T-cell (primary cell): ENCODE measurements at regions of chr2 and their contacts with region 1.

Region 1: DNA sequence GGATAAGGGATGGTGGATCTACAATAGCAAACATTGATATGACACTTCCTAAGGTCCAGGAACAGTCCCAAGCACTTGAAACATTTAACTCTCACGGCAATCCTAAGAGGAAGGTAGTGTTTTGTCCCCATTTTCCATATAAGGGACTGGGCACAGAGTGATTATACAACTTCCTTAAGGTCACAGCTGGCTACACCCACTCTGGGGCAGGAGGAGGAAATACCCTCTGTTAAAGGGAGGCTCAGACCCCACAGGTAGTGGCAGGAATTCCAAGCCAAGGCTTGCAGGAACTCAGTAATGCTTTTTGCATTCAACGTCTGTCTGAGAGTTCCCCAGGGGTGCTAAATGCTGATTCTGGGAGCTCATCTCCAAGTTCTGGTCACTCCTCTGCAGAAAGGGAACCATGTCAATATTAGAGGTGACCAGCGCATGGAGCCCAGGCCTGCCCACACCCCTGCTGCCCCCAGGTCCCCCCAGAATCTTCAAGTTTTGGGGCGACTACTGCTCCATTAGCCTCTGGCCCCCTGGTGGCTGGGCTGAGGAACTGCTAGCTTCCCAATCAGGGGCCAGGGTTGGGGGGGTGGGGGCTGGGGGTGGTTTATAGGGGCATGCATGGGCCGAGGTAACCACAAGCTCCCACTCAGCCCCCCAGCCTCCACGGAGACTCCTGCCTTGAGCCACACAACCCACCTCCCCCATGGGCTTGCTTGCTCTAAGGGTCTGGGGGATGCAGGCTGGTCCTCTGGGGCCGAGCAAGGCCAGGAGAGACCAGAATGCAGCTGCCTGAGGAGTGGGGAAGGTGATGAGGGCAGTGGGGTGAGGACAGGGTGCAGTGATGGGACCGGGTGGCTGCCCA is 11.1 kb downstream of the OBSL1 start:
- DNase-seq: peak in 4 of 35 experiments; percentile 25 to 49 (median 32)
- ATAC-seq: peak; percentile 38 to 67 (median 51)
- H3K4me3 ChIP-seq: no peak overlapping the region
- H3K4me3 Mint-ChIP-seq: no peak overlapping the region
- H3K27ac ChIP-seq: no peak overlapping the region
- H3K27ac Mint-ChIP-seq: no peak overlapping the region
- H3K4me1 ChIP-seq: no peaks in the 10 kb centered on the region
- H3K4me1 Mint-ChIP-seq: no peaks in the 10 kb centered on the region
- H3K27me3 ChIP-seq: peaks cover 0 to 75% of the 10 kb centered on the region in 2 experiments
- H3K27me3 Mint-ChIP-seq: peaks cover 19 to 25% of the 10 kb centered on the region in 2 donors

Region 2: DNA sequence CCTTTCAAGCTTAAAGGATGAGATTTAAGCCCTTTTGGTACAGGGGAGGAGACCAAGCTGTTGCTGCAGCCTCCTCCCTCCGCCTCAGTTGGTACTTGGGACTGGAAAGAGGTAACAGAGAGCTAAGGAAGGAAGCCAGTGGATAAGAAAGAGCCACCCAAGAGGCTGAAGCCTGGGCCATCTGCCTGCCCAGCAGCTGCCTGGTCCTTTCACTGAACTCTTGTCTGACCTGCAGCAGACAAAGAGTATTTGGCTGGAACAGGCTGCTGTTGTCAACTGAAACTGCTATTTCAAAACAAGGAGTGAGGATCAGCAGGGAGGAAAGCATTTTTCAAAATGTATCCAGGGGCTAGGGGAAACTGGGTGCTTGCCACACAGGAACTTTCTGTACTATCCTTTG is 1587.8 kb before region 1 on chr2:
- CTCF ChIA-PET with region 1: no interaction called
- POLR2A ChIA-PET with region 1: no interaction called
- DNase-seq: no peak
- ATAC-seq: no peak
- H3K4me3 ChIP-seq: no peak overlapping the region
- H3K4me3 Mint-ChIP-seq: no peak overlapping the region
- H3K27ac ChIP-seq: no peak overlapping the region
- H3K27ac Mint-ChIP-seq: no peak overlapping the region
- H3K4me1 ChIP-seq: no peaks in the 10 kb centered on the region
- H3K4me1 Mint-ChIP-seq: no peaks in the 10 kb centered on the region
- H3K27me3 ChIP-seq: peaks cover 0 to 7% of the 10 kb centered on the region in 2 experiments
- H3K27me3 Mint-ChIP-seq: peaks cover 10 to 15% of the 10 kb centered on the region in 2 donors

Region 3: DNA sequence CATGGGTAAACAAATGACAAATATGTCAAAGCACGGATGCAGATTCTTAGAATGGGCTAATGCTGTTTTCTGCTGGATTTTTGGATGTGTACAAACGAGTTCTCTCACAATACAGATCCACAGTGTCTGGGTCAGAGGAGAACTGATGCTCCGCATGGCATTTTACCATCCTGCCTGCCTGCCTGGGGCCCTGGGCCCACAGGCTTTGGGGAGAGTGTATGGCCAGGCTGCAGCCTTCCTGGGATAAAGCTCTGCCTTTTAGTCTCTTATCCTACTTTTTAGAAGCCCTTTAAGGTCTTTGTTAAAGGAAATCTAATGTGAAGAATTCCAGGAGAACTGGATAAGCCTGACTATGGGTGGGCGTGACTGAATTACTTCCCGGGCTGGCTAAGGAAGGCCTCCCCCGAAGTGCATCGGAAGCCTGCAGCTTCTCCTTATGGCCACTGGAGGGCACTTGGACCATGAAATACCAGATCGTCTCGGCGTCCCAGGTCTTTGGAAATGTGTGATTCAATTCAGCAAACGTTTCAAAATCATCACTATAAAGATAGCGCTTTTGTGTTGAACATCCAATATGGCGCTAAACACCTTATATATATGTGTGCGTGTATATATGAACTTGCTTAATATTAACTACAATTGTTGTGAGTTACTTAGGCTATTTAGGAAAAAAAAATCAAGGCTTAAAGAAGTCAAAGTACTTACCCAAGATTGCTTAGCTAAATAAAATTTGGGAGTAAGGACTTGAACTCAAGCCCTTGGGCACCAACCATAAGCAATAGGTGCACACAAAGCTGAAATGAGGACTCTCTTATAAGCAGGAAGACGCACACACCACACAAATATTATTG is 157.4 kb before region 1 on chr2:
- CTCF ChIA-PET with region 1: no interaction called
- POLR2A ChIA-PET with region 1: no interaction called
- DNase-seq: peak; percentile 15 to 77 (median 47)
- ATAC-seq: peak; percentile 86 to 90 (median 88)
- H3K4me3 ChIP-seq: no peak overlapping the region
- H3K4me3 Mint-ChIP-seq: no peak overlapping the region
- H3K27ac ChIP-seq: no peak overlapping the region
- H3K27ac Mint-ChIP-seq: no peak overlapping the region
- H3K4me1 ChIP-seq: peaks cover 0 to 7% of the 10 kb centered on the region in 2 experiments
- H3K4me1 Mint-ChIP-seq: peaks cover 0 to 5% (median 5%) of the 10 kb centered on the region in 3 donors
- H3K27me3 ChIP-seq: peaks cover 0 to 37% of the 10 kb centered on the region in 2 experiments
- H3K27me3 Mint-ChIP-seq: peaks cover 0 to 9% of the 10 kb centered on the region in 2 donors

Region 4: DNA sequence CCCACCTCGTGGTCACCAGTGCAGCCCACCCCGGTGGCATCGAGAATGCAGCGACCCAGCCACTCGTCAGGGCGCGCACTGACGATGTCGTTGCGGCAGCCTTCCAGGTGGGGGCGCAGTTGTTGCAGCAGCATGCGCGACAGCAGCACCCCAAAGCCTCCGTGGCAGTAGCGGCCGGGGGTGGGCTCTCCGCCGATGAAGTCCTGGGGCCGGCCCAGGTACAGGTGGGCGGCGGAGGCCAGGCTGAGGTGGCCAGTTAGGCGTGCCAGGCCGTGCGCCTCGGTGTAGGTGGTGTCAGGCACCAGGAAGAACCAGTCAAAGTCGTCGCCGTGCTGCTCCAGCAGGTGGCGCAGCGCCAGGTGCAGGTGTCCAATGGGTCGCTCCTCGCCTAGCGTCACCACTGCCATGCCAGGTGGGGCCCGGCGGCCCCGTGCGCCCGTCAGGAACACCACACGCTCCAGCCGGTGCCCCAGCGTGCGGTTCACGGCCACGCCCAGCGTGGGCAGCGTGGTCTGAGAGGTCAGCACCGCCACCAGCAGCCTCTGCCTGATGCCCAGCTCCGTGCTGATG is 18.6 kb before region 1 on chr2:
- CTCF ChIA-PET with region 1: interaction called, 6 to 13 read pairs
- POLR2A ChIA-PET with region 1: no interaction called
- DNase-seq: peak; percentile 65 to 92 (median 80)
- ATAC-seq: peak; percentile 37 to 45 (median 40)
- H3K4me3 ChIP-seq: peak overlapping the region; percentile 57 to 71
- H3K4me3 Mint-ChIP-seq: peak overlapping the region; percentile 78 to 89 (median 84)
- H3K27ac ChIP-seq: no peak overlapping the region
- H3K27ac Mint-ChIP-seq: no peak overlapping the region
- H3K4me1 ChIP-seq: peaks cover 10 to 33% of the 10 kb centered on the region in 2 experiments
- H3K4me1 Mint-ChIP-seq: peaks cover 24 to 28% (median 27%) of the 10 kb centered on the region in 3 donors
- H3K27me3 ChIP-seq: peaks cover 4 to 14% of the 10 kb centered on the region in 2 experiments
- H3K27me3 Mint-ChIP-seq: peaks cover 0 to 4% of the 10 kb centered on the region in 2 donors

Region 5: DNA sequence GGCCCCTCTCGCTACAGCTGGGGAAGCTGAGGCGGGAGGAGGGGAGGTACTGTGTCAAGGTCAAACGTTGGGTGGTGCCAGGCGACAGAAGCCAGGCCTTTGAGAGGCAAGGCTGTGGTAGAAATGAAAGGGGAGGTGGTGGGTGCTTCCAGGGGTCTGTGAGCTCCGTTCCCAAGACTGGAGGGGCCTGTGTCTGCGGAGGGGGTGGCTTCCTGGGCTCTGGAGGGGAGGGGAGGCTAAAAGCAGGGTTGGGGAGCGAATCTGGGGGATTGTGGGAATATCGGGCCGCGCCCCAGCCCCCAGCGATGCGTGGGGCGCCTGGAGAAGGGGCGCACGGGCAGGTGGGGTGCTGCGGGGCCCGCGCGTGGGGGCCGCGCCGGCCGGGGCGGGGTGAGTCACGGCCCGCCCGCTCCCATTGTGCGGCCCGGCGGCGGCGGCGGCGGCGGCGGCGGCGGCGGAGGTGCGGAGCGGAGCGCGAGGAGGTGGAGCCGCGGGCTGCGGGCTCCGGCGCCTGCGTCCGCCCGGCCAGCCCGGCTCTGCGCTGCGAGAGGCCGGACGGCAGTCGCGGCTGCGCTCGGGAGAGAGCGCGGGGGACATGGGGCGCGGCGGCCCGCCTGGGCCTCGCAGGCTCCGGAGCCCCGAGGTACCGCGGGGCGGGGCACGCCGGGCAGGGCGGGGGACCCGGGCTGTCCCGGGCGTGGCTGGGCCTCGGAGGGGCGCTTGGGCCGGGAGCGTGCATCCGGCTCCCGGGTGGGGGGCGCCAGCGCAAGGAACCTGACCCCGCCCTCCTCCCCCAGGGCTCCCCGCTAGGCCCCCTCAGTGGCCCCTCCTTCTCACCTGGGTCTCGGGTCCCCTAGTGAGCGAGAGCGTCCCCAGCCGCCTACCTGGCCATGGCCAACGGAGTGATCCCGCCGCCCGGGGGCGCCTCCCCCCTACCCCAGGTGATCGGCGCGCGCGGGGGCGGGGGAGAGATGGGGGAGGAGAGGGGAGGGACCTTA is 67.1 kb after region 1 on chr2 and contains the start of gene SLC4A3:
- CTCF ChIA-PET with region 1: no interaction called
- POLR2A ChIA-PET with region 1: no interaction called
- DNase-seq: peak in 3 of 35 experiments; percentile 7 to 31 (median 10)
- ATAC-seq: peak; percentile 59 to 83 (median 61)
- H3K4me3 ChIP-seq: peak within 1 kb of the TSS; percentile 15 to 19
- H3K4me3 Mint-ChIP-seq: peak within 1 kb of the TSS; percentile 58 to 86 (median 70)
- H3K27ac ChIP-seq: no peak within 1 kb of the TSS
- H3K27ac Mint-ChIP-seq: no peak within 1 kb of the TSS
- H3K4me1 ChIP-seq: peaks cover 2 to 12% of the 10 kb centered on the region in 2 experiments
- H3K4me1 Mint-ChIP-seq: peaks cover 2 to 6% (median 5%) of the 10 kb centered on the region in 3 donors
- H3K27me3 ChIP-seq: peaks cover 3 to 58% of the 10 kb centered on the region in 2 experiments
- H3K27me3 Mint-ChIP-seq: peaks cover 24 to 52% of the 10 kb centered on the region in 2 donors
- total RNA-seq, gene SLC4A3: 0.08 to 0.47 (median 0.37) TPM